Ovary (tissue), 10 donors: ENCODE measurements at regions of chr11 and their contacts with region 1.

Region 1: GRCh38 chr11:56486801-56487200 is 4.4 kb downstream of the OR5M8 start:
- DNase-seq: no peak
- H3K4me3 ChIP-seq: no peak overlapping the region
- H3K27ac ChIP-seq: no peak overlapping the region
- H3K4me1 ChIP-seq: no peaks in the 10 kb centered on the region
- H3K27me3 ChIP-seq: no peaks in the 10 kb centered on the region
- CTCF ChIP-seq: no peak
- EP300 ChIP-seq: no peak
- POLR2A ChIP-seq: no peak

Region 2: DNA sequence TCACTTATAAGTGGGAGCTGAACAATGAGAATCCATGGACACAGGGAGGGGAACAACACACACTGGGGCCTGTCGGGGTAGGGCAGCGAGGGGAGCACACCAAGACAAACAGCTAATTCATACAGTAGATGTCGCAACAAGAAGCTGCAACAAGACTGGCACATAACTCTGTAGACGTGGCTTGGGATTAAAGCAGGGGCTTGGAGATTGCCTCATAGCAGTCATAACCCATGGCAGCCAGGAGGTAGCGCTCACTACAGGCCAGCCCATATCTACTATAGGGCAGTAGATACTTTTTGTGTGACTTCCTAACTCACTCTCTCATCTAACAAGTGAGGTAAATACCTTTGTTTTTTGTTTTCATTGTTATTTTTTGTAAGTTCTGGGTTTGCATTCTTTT is 263.4 kb after region 1 on chr11:
- intact Hi-C with region 1: loop called in 1 of 4 experiments (anchors 5 kb)
- DNase-seq: no peak
- H3K4me3 ChIP-seq: no peak overlapping the region
- H3K27ac ChIP-seq: no peak overlapping the region
- H3K4me1 ChIP-seq: no peaks in the 10 kb centered on the region
- H3K27me3 ChIP-seq: no peaks in the 10 kb centered on the region
- CTCF ChIP-seq: no peak
- EP300 ChIP-seq: no peak
- POLR2A ChIP-seq: no peak